Dendritic cell treated with granulocyte-macrophage colony-stimulating factor and Interleukin-4, amounts not matched to agents 40 ng/mL and 50 ng/mL, for 4 days (primary cell): ENCODE measurements at regions of chr19 and their contacts with region 1.

Region 1: DNA sequence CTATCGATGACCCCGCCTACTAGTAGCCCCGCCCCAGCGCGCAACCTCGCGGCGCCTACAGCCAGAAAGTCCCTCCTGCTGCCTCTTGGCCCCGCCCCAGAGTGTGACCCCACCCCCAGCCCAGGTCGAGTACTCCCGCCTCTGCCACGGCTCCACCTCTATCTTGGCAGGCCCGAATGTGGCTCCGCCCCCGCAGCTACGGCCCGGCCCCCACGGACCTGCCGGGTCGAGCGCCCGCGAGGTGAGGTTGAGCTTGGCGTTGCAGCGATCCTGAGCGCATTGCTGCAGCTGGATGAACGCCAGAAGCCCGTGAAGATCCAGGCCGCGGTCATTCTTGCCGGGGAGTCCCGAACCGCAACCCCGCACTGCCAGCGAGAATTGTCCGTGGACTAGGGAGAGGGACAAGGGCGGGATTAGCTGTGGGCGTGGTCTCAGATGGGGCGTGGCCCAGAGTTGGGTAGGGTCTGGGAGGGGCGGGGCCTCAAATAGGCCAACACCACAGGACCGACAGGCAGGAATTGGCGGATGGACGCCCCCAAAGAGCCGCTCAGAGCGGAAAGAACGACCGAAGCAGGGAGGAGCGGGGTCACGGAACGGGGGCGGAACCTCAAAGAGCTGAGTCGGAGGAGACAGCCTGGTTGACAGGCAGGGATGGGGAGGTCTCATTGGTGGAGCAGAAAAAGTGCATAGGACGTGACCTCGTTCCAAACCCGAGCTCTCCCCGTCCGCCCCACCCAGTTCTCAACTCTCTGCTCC is 1.8 kb downstream of the LYPD3 start:
- H3K4me3 Mint-ChIP-seq: peak overlapping the region; percentile 93
- H3K27ac Mint-ChIP-seq: peak overlapping the region; percentile 95
- H3K4me1 Mint-ChIP-seq: peaks cover 62% of the 10 kb centered on the region
- H3K27me3 Mint-ChIP-seq: peaks cover 36% of the 10 kb centered on the region

Region 2: DNA sequence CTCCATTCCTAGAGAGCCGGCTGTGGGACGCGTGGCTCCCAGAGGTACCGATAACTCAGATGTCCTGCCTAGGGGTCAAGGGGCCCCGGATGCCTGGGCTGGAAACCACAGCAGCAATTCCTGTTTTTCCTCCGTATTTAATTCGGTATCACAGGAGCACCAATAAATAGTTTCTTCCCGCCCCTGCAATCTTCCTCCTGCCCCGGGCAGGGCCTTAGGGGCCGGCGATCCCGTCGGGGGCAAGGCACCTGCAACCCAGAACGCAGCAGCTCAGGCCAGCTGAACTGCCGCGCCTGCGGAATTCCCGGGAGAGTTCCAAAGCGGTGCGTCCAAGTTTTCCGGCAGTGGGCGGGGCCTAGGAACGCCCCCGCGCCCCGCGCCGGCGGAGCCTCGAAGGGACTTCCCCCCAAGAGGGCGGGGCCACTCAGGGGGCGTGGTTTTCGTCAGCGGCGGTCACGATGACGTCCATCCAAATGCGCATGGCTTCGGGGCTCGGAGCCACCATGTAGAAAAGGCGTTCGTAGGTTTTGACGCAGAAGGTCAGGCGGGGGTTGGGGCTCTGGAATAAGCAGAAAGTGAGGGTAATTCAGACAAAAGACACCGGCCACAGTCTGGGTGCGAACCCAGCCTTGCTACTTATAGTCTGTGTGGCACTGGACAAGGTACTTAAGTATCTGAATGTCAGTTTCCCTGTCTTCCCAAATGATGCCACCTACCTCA is 11.6 kb after region 1 on chr19:
- intact Hi-C with region 1: loop called (anchors 1 kb)
- H3K4me3 Mint-ChIP-seq: peak overlapping the region; percentile 81
- H3K27ac Mint-ChIP-seq: peak overlapping the region; percentile 92
- H3K4me1 Mint-ChIP-seq: peaks cover 24% of the 10 kb centered on the region
- H3K27me3 Mint-ChIP-seq: peaks cover 10% of the 10 kb centered on the region